ENCODE measurements at regions of chr1 and their contacts with region 1.

Region 1: GRCh38 chr1:23809751-23810171 is 9.2 kb upstream of the GALE start:
- DNase-seq: peak; percentile 92
- ATAC-seq: peak; percentile 97
- H3K4me3 Mint-ChIP-seq: no peak overlapping the region
- H3K27ac Mint-ChIP-seq: no peak overlapping the region
- H3K4me1 Mint-ChIP-seq: peaks cover 26% of the 10 kb centered on the region
- H3K27me3 Mint-ChIP-seq: no peaks in the 10 kb centered on the region

Region 2: GRCh38 chr1:23701996-23702395 is 107.8 kb before region 1 on chr1:
- CTCF ChIA-PET with region 1: no interaction called
- POLR2A ChIA-PET with region 1: no interaction called
- DNase-seq: no peak
- ATAC-seq: no peak
- H3K4me3 Mint-ChIP-seq: no peak overlapping the region
- H3K27ac Mint-ChIP-seq: no peak overlapping the region
- H3K4me1 Mint-ChIP-seq: peaks cover 23% of the 10 kb centered on the region
- H3K27me3 Mint-ChIP-seq: no peaks in the 10 kb centered on the region

Region 3: DNA sequence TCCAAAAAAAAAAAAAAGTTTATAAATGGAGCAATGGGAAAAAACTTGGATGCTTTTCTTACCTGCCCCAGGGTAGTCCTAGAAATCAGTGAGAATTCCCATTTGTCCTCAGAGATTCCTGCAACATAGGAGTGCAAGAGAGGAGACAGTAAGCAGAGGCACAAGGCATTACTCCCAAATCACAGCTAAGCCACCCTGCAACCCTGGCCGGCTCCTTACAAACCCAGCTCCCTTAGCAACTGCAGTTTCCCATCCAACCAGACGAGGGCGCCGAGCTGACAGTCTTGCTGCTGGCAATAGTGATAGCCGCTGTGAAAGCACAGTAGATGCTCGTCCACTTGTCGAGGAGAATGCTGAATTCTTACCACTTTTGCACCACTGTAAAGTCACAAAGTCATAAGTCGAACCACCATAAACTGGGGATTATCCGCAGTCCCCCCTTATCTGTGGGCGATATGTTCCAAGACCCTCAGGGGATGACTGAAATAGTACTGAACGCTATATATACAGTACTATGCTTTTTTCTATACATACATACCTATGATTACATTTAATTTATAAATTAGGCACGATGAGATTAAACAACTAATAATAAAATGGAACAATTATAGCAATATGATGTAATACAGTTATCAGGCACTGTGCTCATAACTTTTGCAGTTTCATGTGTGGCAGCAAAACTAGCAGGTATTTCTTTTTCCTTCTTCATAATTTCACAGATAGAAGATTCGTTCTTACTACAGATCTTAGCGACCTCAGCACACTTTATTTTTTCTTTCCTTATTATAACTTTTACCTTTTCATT is 37.5 kb before region 1 on chr1:
- CTCF ChIA-PET with region 1: interaction called, 34 read pairs
- POLR2A ChIA-PET with region 1: no interaction called
- DNase-seq: peak; percentile 92
- ATAC-seq: peak; percentile 97
- H3K4me3 Mint-ChIP-seq: no peak overlapping the region
- H3K27ac Mint-ChIP-seq: no peak overlapping the region
- H3K4me1 Mint-ChIP-seq: peaks cover 32% of the 10 kb centered on the region
- H3K27me3 Mint-ChIP-seq: no peaks in the 10 kb centered on the region

Region 4: DNA sequence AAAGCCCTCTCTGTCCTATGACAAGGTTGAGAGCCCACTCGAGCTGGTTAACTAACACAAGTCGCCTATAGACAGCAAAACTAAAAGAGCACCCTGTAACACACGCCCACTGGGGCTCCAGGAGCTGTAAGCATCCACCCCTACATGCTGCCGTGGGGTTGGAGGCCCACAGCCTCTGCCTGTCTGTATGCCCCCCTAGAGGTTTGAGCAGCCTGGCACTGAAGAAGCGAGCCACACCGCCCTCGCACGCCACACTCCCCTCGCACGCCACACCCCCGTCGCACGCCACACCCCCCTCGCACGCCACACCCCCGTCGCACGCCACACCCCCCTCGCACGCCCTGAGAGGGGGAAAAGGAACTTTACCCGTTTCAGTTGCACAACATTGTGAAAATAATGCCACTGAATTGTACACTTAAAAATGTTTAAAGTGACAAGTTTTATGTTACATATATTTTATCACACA is 28.7 kb after region 1 on chr1:
- CTCF ChIA-PET with region 1: interaction called, 12 read pairs
- POLR2A ChIA-PET with region 1: no interaction called
- DNase-seq: peak; percentile 82
- ATAC-seq: peak; percentile 100
- H3K4me3 Mint-ChIP-seq: peak overlapping the region; percentile 64
- H3K27ac Mint-ChIP-seq: peak overlapping the region; percentile 9
- H3K4me1 Mint-ChIP-seq: peaks cover 16% of the 10 kb centered on the region
- H3K27me3 Mint-ChIP-seq: peaks cover 19% of the 10 kb centered on the region

Region 5: DNA sequence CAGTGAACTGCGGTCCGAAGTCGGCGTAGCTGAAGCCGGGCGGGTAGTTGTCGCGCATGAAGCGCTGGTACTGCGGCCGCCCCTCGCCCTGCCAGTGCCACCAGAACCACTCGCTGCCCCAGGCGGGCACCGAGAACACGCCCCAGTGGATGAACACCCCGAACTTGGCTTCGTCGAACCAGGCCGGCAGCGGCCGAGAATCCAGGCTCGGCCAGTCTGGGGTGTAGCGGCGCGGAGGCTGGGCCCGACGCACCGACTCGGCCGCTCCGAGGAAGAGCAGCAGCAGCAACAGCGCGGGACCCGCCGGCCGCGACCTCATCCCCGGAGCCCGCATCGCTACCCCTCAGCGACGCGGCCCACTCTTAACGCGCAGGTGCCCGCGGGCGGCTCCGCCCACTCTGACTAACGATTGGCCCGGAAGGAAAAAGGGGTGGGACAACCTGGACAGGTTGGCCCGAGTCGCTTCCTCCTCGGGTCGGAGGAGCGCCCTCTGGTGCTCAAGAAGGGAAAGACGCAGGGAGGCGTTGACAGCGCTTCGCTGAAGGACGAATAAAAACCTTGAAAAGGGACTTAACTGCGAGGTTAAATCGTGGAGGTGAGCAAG is 58.3 kb after region 1 on chr1 and contains the start of gene FUCA1:
- CTCF ChIA-PET with region 1: interaction called, 25 read pairs
- POLR2A ChIA-PET with region 1: no interaction called
- DNase-seq: peak; percentile 96
- ATAC-seq: peak; percentile 100
- H3K4me3 Mint-ChIP-seq: peak within 1 kb of the TSS; percentile 78
- H3K27ac Mint-ChIP-seq: peak within 1 kb of the TSS; percentile 63
- H3K4me1 Mint-ChIP-seq: peaks cover 34% of the 10 kb centered on the region
- H3K27me3 Mint-ChIP-seq: peaks cover 8% of the 10 kb centered on the region
- total RNA-seq, gene FUCA1: 7.1 to 7.3 TPM

Region 6: GRCh38 chr1:23908493-23909341 is 99.0 kb after region 1 on chr1:
- CTCF ChIA-PET with region 1: interaction called, 26 read pairs
- POLR2A ChIA-PET with region 1: interaction called, 4 read pairs
- DNase-seq: peak; percentile 77
- ATAC-seq: peak; percentile 64
- H3K4me3 Mint-ChIP-seq: peak overlapping the region; percentile 57
- H3K27ac Mint-ChIP-seq: peak overlapping the region; percentile 90
- H3K4me1 Mint-ChIP-seq: peaks cover 86% of the 10 kb centered on the region
- H3K27me3 Mint-ChIP-seq: peaks cover 2% of the 10 kb centered on the region

Region 7: DNA sequence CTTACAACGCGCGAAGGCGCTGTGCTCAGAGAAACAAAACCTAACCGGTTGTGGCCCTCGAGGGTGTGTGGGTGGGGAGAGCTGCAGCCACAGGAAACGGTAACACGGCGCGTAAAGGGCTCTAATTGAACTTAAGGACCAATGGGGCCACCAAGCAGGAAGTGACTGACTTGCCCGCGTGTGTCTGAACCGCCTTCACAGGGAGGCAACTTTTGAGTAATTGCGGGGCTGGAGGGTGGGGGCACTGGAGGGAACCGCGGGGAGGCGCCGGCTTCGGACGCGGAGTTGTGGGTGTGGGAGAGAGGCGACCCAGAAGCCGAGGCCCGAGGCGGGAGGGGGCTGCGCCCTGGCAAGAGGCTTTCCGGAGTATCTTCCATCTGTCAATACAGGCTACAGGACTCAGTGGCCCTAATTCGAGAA is 149.3 kb after region 1 on chr1:
- CTCF ChIA-PET with region 1: interaction called, 22 read pairs
- POLR2A ChIA-PET with region 1: interaction called, 4 read pairs
- DNase-seq: peak; percentile 97
- ATAC-seq: peak; percentile 83
- H3K4me3 Mint-ChIP-seq: peak overlapping the region; percentile 100
- H3K27ac Mint-ChIP-seq: peak overlapping the region; percentile 100
- H3K4me1 Mint-ChIP-seq: peaks cover 66% of the 10 kb centered on the region
- H3K27me3 Mint-ChIP-seq: no peaks in the 10 kb centered on the region

Region 8: GRCh38 chr1:23995431-23995837 is 185.7 kb after region 1 on chr1:
- CTCF ChIA-PET with region 1: no interaction called
- POLR2A ChIA-PET with region 1: no interaction called
- DNase-seq: no peak
- ATAC-seq: no peak
- H3K4me3 Mint-ChIP-seq: no peak overlapping the region
- H3K27ac Mint-ChIP-seq: no peak overlapping the region
- H3K4me1 Mint-ChIP-seq: peaks cover 6% of the 10 kb centered on the region
- H3K27me3 Mint-ChIP-seq: no peaks in the 10 kb centered on the region